ENCODE measurements at regions of chr9 and their contacts with region 1.

Region 1: GRCh38 chr9:137551651-137552384 is at the start of gene MRPL41:
- DNase-seq: peak; percentile 98
- H3K4me3 Mint-ChIP-seq: peak within 1 kb of the TSS; percentile 86
- H3K27ac Mint-ChIP-seq: peak within 1 kb of the TSS; percentile 81
- H3K4me1 Mint-ChIP-seq: peaks cover 13% of the 10 kb centered on the region
- H3K27me3 Mint-ChIP-seq: no peaks in the 10 kb centered on the region
- total RNA-seq, gene MRPL41: 52.8 and 53.9 TPM in 2 replicates

Region 2: GRCh38 chr9:136605988-136606660 is 945.7 kb before region 1 on chr9:
- intact Hi-C with region 1: no loop called
- DNase-seq: no peak
- H3K4me3 Mint-ChIP-seq: no peak overlapping the region
- H3K27ac Mint-ChIP-seq: no peak overlapping the region
- H3K4me1 Mint-ChIP-seq: peaks cover 2% of the 10 kb centered on the region
- H3K27me3 Mint-ChIP-seq: peaks cover 5% of the 10 kb centered on the region

Region 3: DNA sequence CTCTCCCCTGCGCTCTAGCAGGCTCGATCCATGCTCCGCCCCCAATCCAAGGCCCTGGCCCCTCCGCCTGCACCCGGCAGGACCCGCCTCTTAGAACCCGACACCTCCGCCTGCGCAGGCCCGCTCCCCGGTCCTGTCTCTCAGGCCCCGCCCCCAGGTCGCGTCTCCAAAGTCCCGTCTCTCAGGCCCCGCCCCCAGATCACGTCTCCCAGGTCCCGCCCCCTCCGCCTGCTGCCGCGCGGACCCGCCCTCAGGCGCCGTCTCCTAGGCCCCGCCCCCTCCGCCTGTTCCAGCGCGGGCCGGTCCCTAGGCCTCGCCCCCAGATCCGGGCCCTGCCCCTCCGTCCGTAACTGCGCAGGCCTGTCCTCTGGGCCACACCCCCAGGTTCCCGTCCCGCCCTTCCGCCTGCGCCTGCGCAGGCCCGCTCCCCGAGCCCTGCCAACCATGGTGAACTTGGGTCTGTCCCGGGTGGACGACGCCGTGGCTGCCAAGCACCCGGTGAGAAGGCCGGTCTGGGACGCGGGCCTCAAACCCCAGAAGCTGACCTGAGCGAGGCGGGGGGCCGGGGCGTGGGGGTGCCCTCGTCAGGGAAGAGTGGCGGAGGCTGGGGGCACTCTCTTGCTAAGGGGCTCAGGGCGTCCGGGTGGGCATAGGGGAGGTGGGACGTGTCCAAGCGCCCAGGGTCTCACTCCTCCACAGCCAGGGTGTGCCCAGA is 760.7 kb before region 1 on chr9 and contains the start of gene TMEM141:
- intact Hi-C with region 1: loop called (anchors 5 kb)
- DNase-seq: peak; percentile 100
- H3K4me3 Mint-ChIP-seq: peak within 1 kb of the TSS; percentile 87
- H3K27ac Mint-ChIP-seq: peak within 1 kb of the TSS; percentile 91
- H3K4me1 Mint-ChIP-seq: peaks cover 26% of the 10 kb centered on the region
- H3K27me3 Mint-ChIP-seq: peaks cover 16% of the 10 kb centered on the region
- total RNA-seq, gene TMEM141: 36.1 and 40.1 TPM in 2 replicates

Region 4: GRCh38 chr9:137459147-137459600 is 92.6 kb before region 1 on chr9 and contains the start of gene NSMF:
- intact Hi-C with region 1: loop called (anchors 5 kb)
- DNase-seq: peak; percentile 99
- H3K4me3 Mint-ChIP-seq: peak within 1 kb of the TSS; percentile 57
- H3K27ac Mint-ChIP-seq: no peak within 1 kb of the TSS
- H3K4me1 Mint-ChIP-seq: peaks cover 16% of the 10 kb centered on the region
- H3K27me3 Mint-ChIP-seq: no peaks in the 10 kb centered on the region
- total RNA-seq, gene NSMF: 68.6 and 69.6 TPM in 2 replicates

Region 5: DNA sequence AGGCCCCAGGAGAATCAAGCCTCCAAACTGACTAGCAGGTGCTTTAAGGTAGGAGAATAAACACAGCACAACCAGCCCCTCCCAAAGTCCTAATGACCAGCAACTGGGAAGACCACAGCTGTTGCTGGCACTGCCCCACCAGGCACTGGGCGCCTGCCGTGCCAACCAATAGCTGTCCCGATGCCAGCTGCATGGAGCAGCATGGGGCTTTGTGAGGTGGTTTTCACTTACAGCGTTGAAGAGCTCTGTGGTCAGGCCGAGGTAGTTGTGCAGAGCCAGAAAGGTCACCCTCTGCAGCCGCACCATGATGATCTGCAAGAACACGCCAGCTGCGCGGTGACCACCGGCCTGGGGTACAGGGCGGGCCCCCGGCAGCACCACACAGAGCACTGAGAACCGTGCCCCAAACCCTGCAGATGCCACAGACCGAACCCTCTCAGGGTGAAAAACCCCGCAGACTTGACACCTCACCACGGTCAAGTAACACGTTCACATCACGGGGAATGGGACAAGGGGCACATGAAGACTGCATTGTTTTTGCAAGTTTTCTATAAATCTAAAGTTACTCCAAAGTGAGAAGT is 30.3 kb before region 1 on chr9:
- intact Hi-C with region 1: no loop called
- DNase-seq: no peak
- H3K4me3 Mint-ChIP-seq: no peak overlapping the region
- H3K27ac Mint-ChIP-seq: no peak overlapping the region
- H3K4me1 Mint-ChIP-seq: peaks cover 4% of the 10 kb centered on the region
- H3K27me3 Mint-ChIP-seq: no peaks in the 10 kb centered on the region

Region 6: GRCh38 chr9:137534256-137535117 is 17.3 kb before region 1 on chr9:
- intact Hi-C with region 1: loop called (anchors 2 kb)
- DNase-seq: peak; percentile 76
- H3K4me3 Mint-ChIP-seq: no peak overlapping the region
- H3K27ac Mint-ChIP-seq: peak overlapping the region; percentile 70
- H3K4me1 Mint-ChIP-seq: peaks cover 28% of the 10 kb centered on the region
- H3K27me3 Mint-ChIP-seq: no peaks in the 10 kb centered on the region

Region 7: DNA sequence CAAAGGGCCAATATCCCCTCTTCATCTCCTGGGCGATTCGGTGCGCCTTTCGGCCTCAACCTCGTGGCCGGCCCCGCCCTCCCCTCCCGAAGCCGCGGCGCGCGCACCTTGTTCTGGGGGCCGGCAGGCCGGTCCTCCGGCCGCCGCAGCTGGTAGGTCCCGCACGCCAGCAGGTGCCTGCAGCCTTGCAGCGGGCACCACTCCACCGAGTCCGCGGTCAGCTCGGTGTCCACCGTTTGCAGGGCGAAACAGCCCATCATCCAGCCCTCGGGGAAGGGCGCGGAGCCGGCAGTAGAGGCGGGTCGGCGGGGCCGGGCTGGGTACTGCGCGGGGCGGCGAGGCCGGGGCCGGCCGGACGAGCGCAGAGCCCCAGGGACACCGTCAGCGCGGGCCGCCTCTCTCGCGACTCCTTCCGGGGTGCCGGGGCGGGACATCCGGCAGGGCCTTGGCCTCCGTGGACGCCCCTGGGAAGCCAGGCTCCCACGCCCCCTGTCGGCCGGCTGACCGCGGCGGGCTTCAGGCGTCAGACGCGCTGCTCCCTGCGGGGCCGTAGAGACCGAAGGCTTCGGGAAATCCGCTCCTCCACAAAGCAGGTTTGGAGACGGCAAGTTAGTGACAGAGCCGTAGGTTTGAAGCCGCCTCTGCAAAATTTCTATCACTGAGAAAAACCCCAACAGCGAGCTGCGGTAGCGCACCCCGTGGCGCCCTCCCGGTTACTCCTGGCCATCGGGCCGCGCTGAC is 26.9 kb after region 1 on chr9 and contains the start of gene DPH7:
- intact Hi-C with region 1: loop called (anchors 2 kb)
- DNase-seq: peak; percentile 99
- H3K4me3 Mint-ChIP-seq: peak within 1 kb of the TSS; percentile 88
- H3K27ac Mint-ChIP-seq: peak within 1 kb of the TSS; percentile 72
- H3K4me1 Mint-ChIP-seq: peaks cover 29% of the 10 kb centered on the region
- H3K27me3 Mint-ChIP-seq: no peaks in the 10 kb centered on the region
- total RNA-seq, gene DPH7: 51.7 and 51.9 TPM in 2 replicates

Region 8: DNA sequence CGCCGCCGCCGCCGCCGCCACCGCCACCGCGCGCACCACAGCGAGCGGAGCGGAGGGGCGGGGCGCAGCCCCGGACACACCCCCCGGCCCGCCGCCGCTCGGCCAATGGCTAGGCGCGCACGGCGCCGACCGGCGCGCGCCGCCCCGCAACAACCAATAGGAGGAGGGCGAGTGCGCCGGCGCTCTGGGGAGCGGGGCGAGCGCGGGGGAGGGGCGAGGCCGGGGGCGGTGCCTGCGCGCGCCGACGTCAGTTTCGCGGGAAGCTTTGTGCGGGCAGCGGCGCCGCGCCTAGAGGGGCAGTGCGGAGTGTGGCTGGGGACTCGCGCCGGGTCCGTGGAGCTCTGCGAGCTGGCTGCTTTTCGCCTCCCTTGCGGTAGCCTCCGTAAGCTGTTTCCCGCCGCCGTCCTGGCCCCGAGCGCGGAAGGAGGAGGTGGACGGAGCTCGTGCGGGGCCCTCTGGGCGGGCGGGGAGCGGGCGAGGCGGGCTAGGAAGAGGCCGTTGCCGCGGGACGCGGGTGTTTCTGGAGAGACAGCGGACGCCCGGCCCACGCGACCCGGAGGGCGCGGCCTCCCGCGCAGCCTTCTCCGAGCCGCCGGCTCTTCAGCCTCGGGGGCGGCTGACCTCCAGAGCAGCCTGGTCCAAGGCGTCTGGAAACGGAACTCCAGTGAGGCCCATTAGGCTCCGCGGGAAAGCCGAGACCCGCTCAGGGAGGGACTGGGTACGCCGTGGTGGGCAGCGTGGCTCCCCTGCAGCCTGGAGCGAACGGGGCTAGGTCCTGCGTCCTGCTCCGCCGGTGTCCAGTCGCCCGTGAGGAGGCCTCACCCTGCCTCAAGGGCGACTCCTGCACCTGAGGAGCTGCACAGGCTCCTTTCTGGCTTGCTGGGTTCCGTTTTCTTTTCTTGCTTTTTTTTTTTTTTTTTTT is 38.9 kb after region 1 on chr9 and contains the start of gene ZMYND19:
- intact Hi-C with region 1: loop called (anchors 2 kb)
- DNase-seq: peak; percentile 98
- H3K4me3 Mint-ChIP-seq: peak within 1 kb of the TSS; percentile 98
- H3K27ac Mint-ChIP-seq: peak within 1 kb of the TSS; percentile 94
- H3K4me1 Mint-ChIP-seq: peaks cover 10% of the 10 kb centered on the region
- H3K27me3 Mint-ChIP-seq: no peaks in the 10 kb centered on the region
- total RNA-seq, gene ZMYND19: 86.4 and 92.4 TPM in 2 replicates

Region 9: DNA sequence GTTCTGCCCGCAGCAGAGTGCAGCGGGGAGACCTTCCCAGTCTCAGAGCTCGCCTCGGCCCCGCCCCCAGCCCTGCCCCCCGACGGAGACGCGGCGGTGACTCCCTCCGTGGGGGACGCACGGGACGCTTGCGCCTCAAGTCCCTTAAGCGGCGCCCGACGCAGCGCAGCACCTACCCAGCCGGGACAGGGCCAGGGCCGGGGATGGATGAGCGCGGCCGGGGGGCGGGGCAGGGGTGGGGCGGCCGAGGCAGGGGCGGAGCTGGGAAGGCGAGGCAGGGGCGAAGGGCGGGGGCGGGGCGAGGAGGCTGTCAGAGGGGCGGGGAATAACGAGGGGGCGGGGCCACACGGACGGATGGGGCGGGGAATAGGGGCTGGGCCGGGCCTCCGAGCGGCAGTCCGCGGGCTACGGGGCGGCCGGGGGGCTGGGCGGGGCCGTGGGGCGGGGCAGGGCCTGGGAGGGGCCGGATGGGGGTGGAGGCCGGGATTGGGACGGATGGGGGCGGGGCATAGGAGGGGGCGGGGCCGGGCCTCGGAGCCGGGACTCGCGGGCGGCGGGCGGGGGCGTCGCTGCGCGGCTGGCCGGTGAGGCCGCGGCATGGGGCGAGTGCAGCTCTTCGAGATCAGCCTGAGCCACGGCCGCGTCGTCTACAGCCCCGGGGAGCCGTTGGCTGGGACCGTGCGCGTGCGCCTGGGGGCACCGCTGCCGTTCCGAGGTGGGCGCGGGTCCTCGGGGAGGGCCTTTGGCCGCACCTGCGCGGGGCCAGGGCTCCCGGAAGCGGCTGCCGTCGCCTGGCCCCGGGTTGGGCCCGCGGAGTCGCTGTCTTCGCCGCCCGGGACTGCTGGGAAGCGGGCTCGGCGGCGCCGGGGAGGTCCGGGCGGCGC is 53.5 kb after region 1 on chr9 and contains the start of gene ARRDC1:
- intact Hi-C with region 1: loop called (anchors 1 kb)
- DNase-seq: peak; percentile 96
- H3K4me3 Mint-ChIP-seq: peak within 1 kb of the TSS; percentile 85
- H3K27ac Mint-ChIP-seq: peak within 1 kb of the TSS; percentile 65
- H3K4me1 Mint-ChIP-seq: peaks cover 28% of the 10 kb centered on the region
- H3K27me3 Mint-ChIP-seq: no peaks in the 10 kb centered on the region
- total RNA-seq, gene ARRDC1: 63.7 and 68.4 TPM in 2 replicates

Measured in activated CD4-positive, alpha-beta T cell treated with anti-CD3 and anti-CD28 coated beads, Interleukin-2, amount 10 ng/mL, durations not matched to agents 24 days and 14 days (primary cell).